ENCODE measurements at regions of chr1 and their contacts with region 1.

Region 1: DNA sequence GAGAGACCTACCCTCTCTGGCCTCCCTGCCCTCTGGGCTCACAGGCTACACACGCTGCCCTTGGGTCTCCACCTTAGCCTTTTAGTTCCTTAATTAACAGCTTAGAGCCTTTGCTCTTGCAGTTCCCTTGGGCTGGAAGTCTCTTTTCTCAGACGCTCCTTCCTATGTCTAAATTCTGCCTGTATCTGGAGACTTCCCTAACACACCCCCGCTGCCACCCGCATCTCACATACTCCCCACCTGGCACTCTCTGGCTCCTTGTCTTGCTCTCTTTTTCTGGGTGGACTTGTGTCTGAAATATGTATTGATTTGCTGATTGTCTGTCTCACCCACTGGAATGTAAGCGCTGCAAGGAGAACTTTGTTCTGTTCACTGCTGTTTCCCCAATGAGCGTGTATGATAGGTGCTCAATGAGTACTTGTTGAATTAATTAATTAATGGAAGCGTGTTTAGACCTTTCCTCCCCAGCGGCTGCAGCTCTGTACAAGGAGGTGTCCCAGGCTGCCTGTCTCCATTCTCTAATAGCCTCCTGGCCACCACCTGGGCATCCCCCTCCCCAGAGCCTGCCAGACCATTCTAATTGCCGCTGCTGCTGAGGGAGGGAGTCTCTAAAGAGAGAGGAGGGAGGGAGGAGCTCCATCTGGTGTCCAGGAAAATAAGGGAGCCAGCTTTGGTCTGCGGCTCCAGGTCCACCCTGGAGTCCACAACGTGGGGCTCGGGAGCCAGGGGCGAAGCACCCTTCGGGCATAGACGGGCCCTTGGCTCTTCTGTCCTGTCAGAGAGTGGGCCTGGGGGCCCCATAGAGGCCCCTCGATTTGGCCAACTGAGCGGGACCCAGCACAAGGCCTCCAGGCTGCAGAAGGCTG is 95.4 kb downstream of the RNF220 start:
- DNase-seq: peak; percentile 16 to 20
- ATAC-seq: peak; percentile 58 to 84 (median 74)
- H3K4me3 ChIP-seq: peak overlapping the region in 5 of 10 donors; percentile 1 to 28 (median 14)
- H3K27ac ChIP-seq: peak overlapping the region in 3 of 10 donors; percentile 9 to 60 (median 25)
- H3K4me1 ChIP-seq: peaks cover 0 to 38% (median 21%) of the 10 kb centered on the region in 9 donors
- H3K27me3 ChIP-seq: peaks cover 0 to 9% (median 0%) of the 10 kb centered on the region in 7 donors
- CTCF ChIP-seq: peak; percentile 17 to 71 (median 53)

Region 2: GRCh38 chr1:44377925-44378784 is 122.3 kb before region 1 on chr1:
- intact Hi-C with region 1: loop called in 6 of 10 experiments (anchors 2 to 10 kb)
- DNase-seq: peak; percentile 15 to 51
- ATAC-seq: peak in 6 of 8 donors; percentile 25 to 62 (median 46)
- H3K4me3 ChIP-seq: no peak overlapping the region
- H3K27ac ChIP-seq: no peak overlapping the region
- H3K4me1 ChIP-seq: no peaks in the 10 kb centered on the region
- H3K27me3 ChIP-seq: no peaks in the 10 kb centered on the region
- CTCF ChIP-seq: peak; percentile 63 to 85 (median 79)

Region 3: GRCh38 chr1:44405041-44405797 is 95.2 kb before region 1 on chr1 and contains the start of gene RNF220:
- intact Hi-C with region 1: loop called in 6 of 10 experiments (anchors 2 to 10 kb)
- DNase-seq: peak; percentile 54 to 70
- ATAC-seq: peak; percentile 67 to 85 (median 82)
- H3K4me3 ChIP-seq: peak within 1 kb of the TSS; percentile 23 to 67 (median 52)
- H3K27ac ChIP-seq: peak within 1 kb of the TSS in 7 of 10 donors; percentile 15 to 74 (median 52)
- H3K4me1 ChIP-seq: peaks cover 7 to 53% (median 40%) of the 10 kb centered on the region in 9 donors
- H3K27me3 ChIP-seq: peaks cover 21 to 99% (median 91%) of the 10 kb centered on the region in 7 donors
- CTCF ChIP-seq: peak in 5 of 9 donors; percentile 15 to 37 (median 25)
- total RNA-seq, gene RNF220: 46.4 to 82.5 (median 58.0) TPM

Region 4: GRCh38 chr1:44417351-44418021 is 82.9 kb before region 1 on chr1:
- intact Hi-C with region 1: loop called in 5 of 10 experiments (anchors 5 to 10 kb)
- DNase-seq: peak in 1 of 2 donors; percentile 58
- ATAC-seq: peak; percentile 74 to 85 (median 81)
- H3K4me3 ChIP-seq: peak overlapping the region; percentile 27 to 54 (median 44)
- H3K27ac ChIP-seq: peak overlapping the region in 7 of 10 donors; percentile 5 to 61 (median 23)
- H3K4me1 ChIP-seq: peaks cover 4 to 37% (median 20%) of the 10 kb centered on the region in 9 donors
- H3K27me3 ChIP-seq: peaks cover 0 to 95% (median 87%) of the 10 kb centered on the region in 7 donors
- CTCF ChIP-seq: no peak

Region 5: GRCh38 chr1:44423591-44424537 is 76.5 kb before region 1 on chr1:
- intact Hi-C with region 1: loop called in 6 of 10 experiments (anchors 5 to 10 kb)
- DNase-seq: peak; percentile 27 to 77
- ATAC-seq: peak; percentile 85 to 95 (median 92)
- H3K4me3 ChIP-seq: peak overlapping the region in 4 of 10 donors; percentile 8 to 24 (median 15)
- H3K27ac ChIP-seq: peak overlapping the region in 9 of 10 donors; percentile 9 to 81 (median 37)
- H3K4me1 ChIP-seq: peaks cover 11 to 51% (median 36%) of the 10 kb centered on the region in 9 donors
- H3K27me3 ChIP-seq: peaks cover 0 to 63% (median 30%) of the 10 kb centered on the region in 7 donors
- CTCF ChIP-seq: no peak

Region 6: GRCh38 chr1:44594871-44595746 is 94.7 kb after region 1 on chr1:
- intact Hi-C with region 1: loop called in 1 of 10 experiments (anchors 5 kb)
- DNase-seq: peak; percentile 77 to 88
- ATAC-seq: peak; percentile 92 to 95 (median 94)
- H3K4me3 ChIP-seq: no peak overlapping the region
- H3K27ac ChIP-seq: no peak overlapping the region
- H3K4me1 ChIP-seq: no peaks in the 10 kb centered on the region
- H3K27me3 ChIP-seq: peaks cover 0 to 21% (median 4%) of the 10 kb centered on the region in 7 donors
- CTCF ChIP-seq: peak; percentile 92 to 99 (median 98)